Body of pancreas (tissue), 4 donors: ENCODE measurements at regions of chr1 and their contacts with region 1.

Region 1: GRCh38 chr1:99818063-99818699 is 32.0 kb upstream of the AGL start:
- DNase-seq: no peak
- ATAC-seq: no peak
- H3K4me3 ChIP-seq: no peak overlapping the region
- H3K27ac ChIP-seq: no peak overlapping the region
- H3K4me1 ChIP-seq: no peaks in the 10 kb centered on the region
- H3K27me3 ChIP-seq: no peaks in the 10 kb centered on the region
- CTCF ChIP-seq: no peak
- POLR2A ChIP-seq: no peak

Region 2: GRCh38 chr1:100459358-100460114 is 641.4 kb after region 1 on chr1:
- intact Hi-C with region 1: loop called (anchors 10 kb)
- DNase-seq: peak; percentile 68 to 78 (median 72)
- ATAC-seq: peak; percentile 90
- H3K4me3 ChIP-seq: no peak overlapping the region
- H3K27ac ChIP-seq: no peak overlapping the region
- H3K4me1 ChIP-seq: no peaks in the 10 kb centered on the region
- H3K27me3 ChIP-seq: no peaks in the 10 kb centered on the region
- CTCF ChIP-seq: peak in 6 of 7 experiments; percentile 66 to 84 (median 80)
- POLR2A ChIP-seq: no peak